ENCODE measurements at regions of chr5 and their contacts with region 1.

Region 1: DNA sequence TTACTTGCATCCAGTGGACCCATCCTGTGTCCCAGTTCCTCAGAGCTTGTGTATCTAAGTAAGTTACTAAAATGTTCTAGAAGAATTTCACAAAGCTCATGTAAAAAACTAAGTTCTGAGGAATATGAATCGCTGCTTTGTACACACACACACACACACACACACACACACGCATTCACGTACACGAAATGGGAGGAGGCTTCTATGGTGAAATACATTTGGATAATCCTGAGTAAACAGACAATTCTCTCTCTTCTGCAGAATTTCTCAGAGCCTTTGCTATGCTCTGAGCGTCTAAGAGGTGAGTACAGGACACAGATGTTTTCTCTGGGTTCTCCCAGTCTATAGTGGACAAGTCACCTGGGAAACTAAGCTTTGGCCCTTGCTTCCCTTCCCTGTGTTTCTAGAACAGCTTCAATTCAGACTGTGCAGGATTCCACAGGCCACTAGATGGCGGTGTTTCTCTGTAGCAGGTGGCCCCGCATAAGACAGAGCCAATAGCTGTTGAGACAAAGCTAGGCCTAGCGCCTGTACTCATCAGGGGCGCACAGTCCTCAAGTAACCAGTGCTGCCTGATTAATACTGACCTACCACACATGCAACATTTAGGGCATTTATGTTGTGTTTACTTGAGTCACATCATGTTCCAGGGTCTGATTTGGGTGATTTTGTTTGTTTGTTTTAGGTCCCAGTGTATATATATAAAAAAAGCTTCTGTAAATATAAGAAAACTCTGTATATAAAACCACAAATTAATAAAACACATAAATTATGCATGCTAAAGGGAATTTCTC is 114.8 kb downstream of the LIFR start:
- DNase-seq: peak; percentile 82
- H3K4me3 ChIP-seq: no peak overlapping the region
- H3K27ac ChIP-seq: no peak overlapping the region
- H3K27me3 ChIP-seq: peaks cover 2% of the 10 kb centered on the region
- CTCF ChIP-seq: peak; percentile 99

Region 2: DNA sequence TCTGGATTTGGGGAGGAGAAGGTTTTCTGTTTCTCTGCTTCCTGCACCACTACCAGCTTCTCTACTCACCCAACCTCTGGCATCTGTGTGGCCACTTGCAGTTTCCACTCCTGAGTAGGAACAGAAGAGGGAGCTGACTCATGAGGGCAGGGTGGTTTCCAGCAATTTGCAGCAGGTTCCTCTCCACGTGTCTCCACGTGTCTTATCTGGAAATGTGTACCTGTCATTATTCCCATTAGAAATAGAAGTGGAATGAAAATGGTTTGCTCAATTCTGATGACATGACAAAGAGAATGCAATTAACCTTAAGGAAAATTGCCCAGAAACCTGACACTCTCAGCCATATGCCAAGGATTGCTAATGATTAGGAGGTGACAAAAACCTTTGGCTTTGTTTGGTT is 150.3 kb before region 1 on chr5:
- CTCF ChIA-PET with region 1: no interaction called
- POLR2A ChIA-PET with region 1: no interaction called
- DNase-seq: no peak
- H3K4me3 ChIP-seq: no peak overlapping the region
- H3K27ac ChIP-seq: no peak overlapping the region
- H3K27me3 ChIP-seq: no peaks in the 10 kb centered on the region
- CTCF ChIP-seq: no peak

Region 3: GRCh38 chr5:38323645-38324295 is 117.9 kb before region 1 on chr5:
- CTCF ChIA-PET with region 1: no interaction called
- POLR2A ChIA-PET with region 1: no interaction called
- DNase-seq: no peak
- H3K4me3 ChIP-seq: no peak overlapping the region
- H3K27ac ChIP-seq: no peak overlapping the region
- H3K27me3 ChIP-seq: peaks cover 8% of the 10 kb centered on the region
- CTCF ChIP-seq: no peak

Region 4: GRCh38 chr5:38382898-38383297 is 58.8 kb before region 1 on chr5:
- CTCF ChIA-PET with region 1: interaction called, 21 read pairs
- POLR2A ChIA-PET with region 1: no interaction called
- DNase-seq: peak; percentile 46
- H3K4me3 ChIP-seq: no peak overlapping the region
- H3K27ac ChIP-seq: no peak overlapping the region
- H3K27me3 ChIP-seq: peaks cover 25% of the 10 kb centered on the region
- CTCF ChIP-seq: peak; percentile 86

Region 5: DNA sequence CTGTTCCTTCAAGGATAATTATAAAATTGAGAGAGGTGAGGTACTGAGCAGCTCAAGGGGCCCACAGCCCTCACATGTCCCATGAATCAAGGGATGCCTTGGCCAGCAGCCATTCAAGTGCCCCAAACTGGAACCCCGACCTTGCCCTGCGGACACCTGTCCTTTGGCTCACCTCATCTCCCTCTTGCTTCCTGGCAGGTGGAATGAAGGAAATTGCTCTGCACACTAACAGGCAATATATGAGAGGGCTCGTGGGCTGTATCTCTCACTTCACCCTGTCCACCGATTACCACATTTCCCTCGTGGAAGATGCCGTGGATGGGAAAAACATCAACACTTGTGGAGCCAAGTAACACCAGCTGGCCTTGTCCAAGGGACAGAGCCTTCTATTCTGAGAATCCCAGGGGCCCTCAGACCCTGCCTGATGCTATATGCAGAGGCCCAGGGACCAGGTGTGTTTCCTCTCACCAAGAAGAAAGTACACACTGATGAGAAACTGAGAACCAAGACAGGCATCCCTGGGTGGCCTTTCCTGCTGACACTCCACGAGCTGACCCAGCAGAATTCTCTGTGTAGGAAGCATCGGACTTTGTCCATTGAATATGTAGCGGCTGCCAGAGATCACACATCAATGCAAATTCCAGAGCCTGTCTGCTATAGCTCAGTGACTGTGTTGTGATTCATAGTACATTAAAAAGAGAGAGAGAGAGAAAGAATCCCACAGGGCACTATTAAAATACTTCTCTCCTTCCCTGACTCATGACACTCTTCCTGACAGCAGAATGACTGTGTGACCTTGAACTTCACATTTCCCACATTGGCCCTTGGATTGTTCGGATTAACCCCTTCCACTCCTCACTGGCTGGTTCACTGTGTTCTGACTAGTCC is 22.2 kb after region 1 on chr5:
- CTCF ChIA-PET with region 1: interaction called, 31 read pairs
- POLR2A ChIA-PET with region 1: interaction called, 4 read pairs
- DNase-seq: peak; percentile 59
- H3K4me3 ChIP-seq: no peak overlapping the region
- H3K27ac ChIP-seq: peak overlapping the region; percentile 77
- H3K27me3 ChIP-seq: no peaks in the 10 kb centered on the region
- CTCF ChIP-seq: no peak

Region 6: GRCh38 chr5:38515646-38516045 is 74.0 kb after region 1 on chr5:
- CTCF ChIA-PET with region 1: interaction called, 14 read pairs
- POLR2A ChIA-PET with region 1: no interaction called
- DNase-seq: no peak
- H3K4me3 ChIP-seq: no peak overlapping the region
- H3K27ac ChIP-seq: no peak overlapping the region
- H3K27me3 ChIP-seq: no peaks in the 10 kb centered on the region
- CTCF ChIP-seq: peak; percentile 61

Region 7: GRCh38 chr5:38621840-38622437 is 180.3 kb after region 1 on chr5:
- CTCF ChIA-PET with region 1: interaction called, 10 read pairs
- POLR2A ChIA-PET with region 1: no interaction called
- DNase-seq: no peak
- H3K4me3 ChIP-seq: no peak overlapping the region
- H3K27ac ChIP-seq: no peak overlapping the region
- H3K27me3 ChIP-seq: peaks cover 3% of the 10 kb centered on the region
- CTCF ChIP-seq: no peak

Region 8: GRCh38 chr5:38783011-38783561 is 341.4 kb after region 1 on chr5:
- CTCF ChIA-PET with region 1: interaction called, 26 read pairs
- POLR2A ChIA-PET with region 1: no interaction called
- DNase-seq: peak; percentile 83
- H3K4me3 ChIP-seq: no peak overlapping the region
- H3K27ac ChIP-seq: peak overlapping the region; percentile 77
- H3K27me3 ChIP-seq: no peaks in the 10 kb centered on the region
- CTCF ChIP-seq: peak; percentile 37

Region 9: GRCh38 chr5:38835887-38836286 is 394.2 kb after region 1 on chr5:
- CTCF ChIA-PET with region 1: interaction called, 22 read pairs
- POLR2A ChIA-PET with region 1: no interaction called
- DNase-seq: no peak
- H3K4me3 ChIP-seq: no peak overlapping the region
- H3K27ac ChIP-seq: no peak overlapping the region
- H3K27me3 ChIP-seq: no peaks in the 10 kb centered on the region
- CTCF ChIP-seq: no peak